Esophagus squamous epithelium (tissue), 5 donors: ENCODE measurements at regions of chr3 and their contacts with region 1.

Region 1: DNA sequence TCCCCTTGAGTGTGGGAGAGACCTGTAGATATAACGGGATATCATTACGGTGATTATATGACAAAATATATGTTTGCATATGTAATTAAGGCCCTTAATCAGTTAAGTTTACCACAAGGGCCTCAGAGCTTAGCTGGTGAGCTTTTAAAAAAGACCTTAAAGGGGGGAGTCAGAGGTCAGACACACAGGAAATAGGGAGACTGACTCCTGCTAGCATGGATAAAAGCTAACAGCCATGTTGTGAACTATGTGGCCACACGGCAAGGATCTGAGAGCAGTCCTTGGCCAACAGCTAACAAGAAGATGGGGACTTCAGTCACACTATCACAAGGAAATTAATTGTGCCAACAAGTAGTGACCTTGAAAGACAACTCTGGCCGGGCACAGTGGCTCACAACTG is 3.1 kb downstream of the STAG1 start:
- DNase-seq: no peak
- H3K4me3 ChIP-seq: no peak overlapping the region
- H3K27ac ChIP-seq: peak overlapping the region in 3 of 4 donors; percentile 7 to 100 (median 98)
- H3K4me1 ChIP-seq: peaks cover 4 to 68% (median 30%) of the 10 kb centered on the region in 3 donors
- H3K27me3 ChIP-seq: no peaks in the 10 kb centered on the region
- CTCF ChIP-seq: no peak
- POLR2A ChIP-seq: no peak

Region 2: DNA sequence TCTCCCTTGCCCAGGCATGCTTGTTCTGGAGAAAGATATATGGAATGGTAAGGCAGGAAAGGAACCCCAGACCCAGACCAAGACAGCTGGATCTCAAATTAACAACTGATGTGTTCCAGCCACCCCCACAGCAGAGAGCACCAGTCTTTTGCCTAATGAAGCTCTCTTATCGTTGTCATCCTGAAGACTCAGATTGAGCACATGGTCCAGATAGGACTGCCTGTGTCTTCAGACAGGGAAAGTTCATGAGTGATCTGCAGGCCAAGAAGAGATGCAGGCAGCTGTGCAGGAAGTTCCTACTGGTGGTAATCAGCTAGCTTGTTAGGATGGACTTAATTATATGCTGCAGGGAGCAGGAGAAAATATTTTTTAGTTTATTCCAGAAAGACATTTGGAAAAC is 730.2 kb before region 1 on chr3:
- intact Hi-C with region 1: no loop called
- DNase-seq: no peak
- H3K4me3 ChIP-seq: no peak overlapping the region
- H3K27ac ChIP-seq: no peak overlapping the region
- H3K4me1 ChIP-seq: peaks cover 0 to 22% (median 6%) of the 10 kb centered on the region in 3 donors
- H3K27me3 ChIP-seq: no peaks in the 10 kb centered on the region
- CTCF ChIP-seq: no peak
- POLR2A ChIP-seq: no peak

Region 3: DNA sequence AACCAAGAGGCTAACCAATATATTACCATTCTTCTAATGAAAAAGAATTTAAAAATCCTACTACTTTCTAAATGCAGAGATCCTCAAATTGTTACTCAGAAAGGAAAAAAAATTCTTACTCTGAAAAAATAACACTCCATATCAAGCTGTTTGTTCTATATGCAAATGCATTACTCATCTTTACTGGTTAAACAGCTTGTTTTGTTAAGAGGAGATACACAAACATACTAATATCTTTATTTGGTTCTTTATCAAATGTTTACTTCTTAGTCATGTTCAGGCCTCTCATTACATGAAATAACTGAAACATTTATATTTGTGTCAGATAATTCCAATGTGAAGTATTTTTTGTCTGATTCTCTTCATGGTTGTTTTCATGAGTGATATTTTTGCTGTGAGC is 352.2 kb before region 1 on chr3:
- intact Hi-C with region 1: loop called (anchors 10 kb)
- DNase-seq: no peak
- H3K4me3 ChIP-seq: no peak overlapping the region
- H3K27ac ChIP-seq: no peak overlapping the region
- H3K4me1 ChIP-seq: no peaks in the 10 kb centered on the region
- H3K27me3 ChIP-seq: no peaks in the 10 kb centered on the region
- CTCF ChIP-seq: no peak
- POLR2A ChIP-seq: no peak

Region 4: DNA sequence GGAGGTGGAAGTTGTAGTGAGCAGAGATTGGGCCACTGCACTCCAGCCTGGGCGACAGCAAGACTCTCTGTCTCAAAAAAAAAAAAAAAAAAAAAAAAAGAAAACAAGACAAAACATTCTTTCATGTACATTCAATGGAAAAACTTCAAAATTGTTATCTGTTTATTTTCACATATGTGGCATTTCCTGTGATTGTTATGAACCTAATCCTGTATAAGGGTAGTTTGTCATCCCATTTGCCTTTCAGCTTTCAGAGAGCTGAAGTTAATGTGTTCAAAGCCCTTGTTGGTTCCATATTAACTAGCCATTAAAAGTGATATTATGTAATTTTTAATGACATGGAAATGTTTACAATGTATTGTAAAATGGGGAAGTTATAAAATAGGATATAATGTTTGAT is 95.6 kb after region 1 on chr3:
- intact Hi-C with region 1: no loop called
- DNase-seq: no peak
- H3K4me3 ChIP-seq: no peak overlapping the region
- H3K27ac ChIP-seq: no peak overlapping the region
- H3K4me1 ChIP-seq: peaks cover 0 to 5% (median 0%) of the 10 kb centered on the region in 3 donors
- H3K27me3 ChIP-seq: no peaks in the 10 kb centered on the region
- CTCF ChIP-seq: no peak
- POLR2A ChIP-seq: no peak

Region 5: DNA sequence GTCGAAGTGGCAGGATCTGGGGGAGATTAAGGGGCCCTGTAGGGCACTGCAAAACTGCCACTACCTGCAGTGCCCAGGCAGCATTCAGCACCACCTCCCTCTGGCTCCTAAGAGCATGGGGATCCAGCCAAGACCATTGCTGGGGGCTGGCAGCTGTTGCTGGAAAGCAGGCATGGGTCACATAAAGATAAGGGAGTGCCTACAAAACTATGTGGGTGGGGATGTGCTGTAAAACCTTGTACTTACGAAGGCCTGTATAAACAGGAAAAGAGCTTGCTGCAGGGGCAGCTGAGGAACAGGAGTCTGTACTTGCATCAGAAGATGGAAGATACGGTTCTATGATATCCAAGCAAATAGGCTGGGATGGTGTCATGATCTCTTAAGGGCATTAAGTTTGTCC is 235.7 kb after region 1 on chr3:
- intact Hi-C with region 1: no loop called
- DNase-seq: no peak
- H3K4me3 ChIP-seq: no peak overlapping the region
- H3K27ac ChIP-seq: peak overlapping the region; percentile 70 to 85 (median 79)
- H3K4me1 ChIP-seq: peaks cover 0 to 65% (median 16%) of the 10 kb centered on the region in 3 donors
- H3K27me3 ChIP-seq: no peaks in the 10 kb centered on the region
- CTCF ChIP-seq: no peak
- POLR2A ChIP-seq: no peak

Region 6: DNA sequence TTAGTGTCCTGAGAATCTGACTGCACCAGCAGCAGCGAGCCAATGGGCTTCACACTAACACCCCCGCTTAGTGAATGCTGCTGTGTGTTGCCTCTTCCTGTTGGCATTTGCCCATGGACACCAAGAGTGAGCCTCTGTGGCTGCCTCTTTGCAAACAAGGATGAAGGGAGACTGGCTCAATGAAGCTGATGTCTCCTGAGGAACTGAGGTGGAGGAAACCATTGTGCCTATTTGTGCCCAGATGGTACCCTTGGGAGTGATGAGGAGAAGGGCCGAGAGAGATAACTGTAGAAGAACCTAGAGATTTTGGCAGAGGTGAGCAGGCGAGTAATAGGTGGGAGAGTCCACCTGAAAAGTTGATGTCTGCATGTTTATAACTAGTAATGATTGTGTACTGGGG is 259.9 kb after region 1 on chr3:
- intact Hi-C with region 1: no loop called
- DNase-seq: no peak
- H3K4me3 ChIP-seq: no peak overlapping the region
- H3K27ac ChIP-seq: no peak overlapping the region
- H3K4me1 ChIP-seq: peaks cover 0 to 17% (median 3%) of the 10 kb centered on the region in 3 donors
- H3K27me3 ChIP-seq: no peaks in the 10 kb centered on the region
- CTCF ChIP-seq: no peak
- POLR2A ChIP-seq: no peak